ENCODE measurements at regions of chr17 and their contacts with region 1.

Region 1: GRCh38 chr17:2266045-2266864 is 37.3 kb downstream of the SMG6 start:
- DNase-seq: peak; percentile 96
- H3K4me3 Mint-ChIP-seq: peak overlapping the region; percentile 75
- H3K27ac Mint-ChIP-seq: peak overlapping the region; percentile 98
- H3K4me1 Mint-ChIP-seq: peaks cover 70% of the 10 kb centered on the region
- H3K27me3 Mint-ChIP-seq: no peaks in the 10 kb centered on the region

Region 2: GRCh38 chr17:1870592-1870991 is 395.7 kb before region 1 on chr17:
- intact Hi-C with region 1: loop called (anchors 5 kb)
- DNase-seq: peak; percentile 84
- H3K4me3 Mint-ChIP-seq: peak overlapping the region; percentile 72
- H3K27ac Mint-ChIP-seq: peak overlapping the region; percentile 92
- H3K4me1 Mint-ChIP-seq: peaks cover 71% of the 10 kb centered on the region
- H3K27me3 Mint-ChIP-seq: no peaks in the 10 kb centered on the region

Region 3: GRCh38 chr17:2222901-2223616 is 43.2 kb before region 1 on chr17:
- intact Hi-C with region 1: loop called (anchors 1 kb)
- DNase-seq: peak; percentile 88
- H3K4me3 Mint-ChIP-seq: peak overlapping the region; percentile 43
- H3K27ac Mint-ChIP-seq: peak overlapping the region; percentile 88
- H3K4me1 Mint-ChIP-seq: peaks cover 45% of the 10 kb centered on the region
- H3K27me3 Mint-ChIP-seq: no peaks in the 10 kb centered on the region

Region 4: DNA sequence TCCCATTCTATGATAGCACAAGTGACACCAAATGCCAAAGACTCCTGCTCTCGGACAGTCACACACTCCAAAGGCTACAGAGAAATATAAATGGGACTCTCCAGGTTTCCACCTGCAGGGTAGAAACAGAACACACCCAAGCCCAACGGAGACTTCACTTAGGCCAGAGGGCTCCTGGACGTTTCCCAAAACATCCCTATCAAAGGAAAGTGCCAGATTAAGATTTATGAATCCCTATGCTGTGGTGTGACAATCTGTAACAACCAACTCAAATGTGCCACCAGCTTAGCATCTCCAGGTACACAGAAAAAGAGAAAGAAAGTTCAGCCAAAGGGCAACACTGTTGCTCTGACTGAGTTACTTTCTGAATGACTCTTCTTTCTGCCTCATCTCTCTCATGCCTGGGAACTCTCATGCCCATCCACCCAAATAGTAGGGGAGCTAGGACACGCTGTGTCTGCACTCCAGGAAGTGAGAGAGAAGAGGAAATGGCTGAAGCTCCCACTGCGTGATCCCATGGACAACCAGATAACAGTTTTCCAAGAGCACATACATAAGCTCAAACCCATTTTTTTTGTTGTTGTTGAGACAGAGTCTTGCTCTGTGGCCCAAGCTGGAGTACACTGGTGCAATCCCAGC is 12.4 kb before region 1 on chr17:
- intact Hi-C with region 1: loop called (anchors 1 kb)
- DNase-seq: peak; percentile 86
- H3K4me3 Mint-ChIP-seq: peak overlapping the region; percentile 77
- H3K27ac Mint-ChIP-seq: peak overlapping the region; percentile 97
- H3K4me1 Mint-ChIP-seq: peaks cover 70% of the 10 kb centered on the region
- H3K27me3 Mint-ChIP-seq: no peaks in the 10 kb centered on the region

Region 5: GRCh38 chr17:2282297-2282873 is 16.1 kb after region 1 on chr17:
- intact Hi-C with region 1: loop called (anchors 2 kb)
- DNase-seq: peak; percentile 76
- H3K4me3 Mint-ChIP-seq: no peak overlapping the region
- H3K27ac Mint-ChIP-seq: peak overlapping the region; percentile 76
- H3K4me1 Mint-ChIP-seq: peaks cover 36% of the 10 kb centered on the region
- H3K27me3 Mint-ChIP-seq: no peaks in the 10 kb centered on the region

Region 6: DNA sequence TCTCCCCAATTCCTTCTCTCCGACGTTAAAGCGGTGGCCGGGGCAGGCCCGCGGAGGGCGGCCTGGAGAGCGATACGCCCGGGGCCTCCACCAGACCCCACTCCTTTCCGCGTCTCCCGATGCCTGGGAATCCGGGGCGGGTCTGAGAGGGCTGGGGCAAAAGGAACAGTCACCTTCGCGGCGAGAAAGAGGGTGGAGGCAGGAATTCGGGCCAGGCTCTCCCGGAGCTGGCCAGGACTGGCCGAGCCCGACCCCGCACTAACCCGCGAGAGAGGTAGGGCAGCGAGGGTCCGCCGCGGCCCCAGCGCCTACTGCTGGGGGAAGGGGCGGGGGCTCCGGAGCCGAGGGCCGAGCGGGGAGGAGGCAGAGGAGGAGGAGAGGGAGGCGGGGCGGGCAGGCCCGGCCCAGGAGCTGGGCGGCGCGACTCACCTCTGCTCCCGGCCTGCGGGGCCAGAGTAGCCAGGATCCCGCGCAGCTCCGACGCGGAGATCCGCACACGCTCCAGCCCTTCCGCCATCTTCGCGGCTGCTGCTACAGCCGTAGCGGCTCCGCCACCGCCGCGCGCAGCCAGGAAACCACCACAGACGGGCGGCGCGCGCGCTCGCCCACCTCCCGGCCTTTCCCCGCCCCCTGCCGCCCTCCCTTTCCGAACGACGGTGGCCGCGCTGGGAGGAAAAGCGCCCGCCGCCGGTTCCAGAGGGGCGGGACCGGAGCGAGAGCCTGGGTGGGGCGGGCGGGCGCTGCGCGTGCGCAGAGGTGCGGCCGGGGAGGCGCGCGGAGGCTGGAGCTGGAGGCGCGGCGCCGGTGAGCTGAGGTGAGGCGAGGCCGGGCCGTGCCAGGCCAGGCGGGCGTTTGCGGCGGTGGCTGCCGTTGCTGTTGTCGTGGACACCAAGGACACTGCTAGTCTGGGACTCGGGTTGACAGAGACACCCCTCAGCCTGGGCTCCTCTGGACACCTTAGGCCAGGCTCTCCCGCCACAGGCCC is 37.2 kb after region 1 on chr17 and contains the starts of genes SMG6 and SRR:
- intact Hi-C with region 1: no loop called
- DNase-seq: peak; percentile 97
- H3K4me3 Mint-ChIP-seq: peak within 1 kb of the TSS; percentile 91
- H3K27ac Mint-ChIP-seq: peak within 1 kb of the TSS; percentile 84
- H3K4me1 Mint-ChIP-seq: peaks cover 35% of the 10 kb centered on the region
- H3K27me3 Mint-ChIP-seq: no peaks in the 10 kb centered on the region
- total RNA-seq, gene SMG6: 31.6 and 36.2 TPM in 2 replicates
- total RNA-seq, gene SRR: 13.8 and 15.6 TPM in 2 replicates

Region 7: GRCh38 chr17:2369551-2370210 is 103.4 kb after region 1 on chr17:
- intact Hi-C with region 1: no loop called
- DNase-seq: no peak
- H3K4me3 Mint-ChIP-seq: no peak overlapping the region
- H3K27ac Mint-ChIP-seq: no peak overlapping the region
- H3K4me1 Mint-ChIP-seq: no peaks in the 10 kb centered on the region
- H3K27me3 Mint-ChIP-seq: no peaks in the 10 kb centered on the region